ENCODE measurements at regions of chr3 and their contacts with region 1.

Region 1: GRCh38 chr3:47791193-47791855 is 9.6 kb upstream of the SMARCC1 start:
- DNase-seq: no peak
- ATAC-seq: no peak
- H3K4me3 ChIP-seq: no peak overlapping the region
- H3K4me3 Mint-ChIP-seq: no peak overlapping the region
- H3K27ac ChIP-seq: no peak overlapping the region
- H3K27ac Mint-ChIP-seq: peak overlapping the region in 1 of 9 donors; percentile 14
- H3K4me1 ChIP-seq: no peaks in the 10 kb centered on the region
- H3K4me1 Mint-ChIP-seq: peaks cover 0 to 5% (median 3%) of the 10 kb centered on the region in 7 donors
- H3K27me3 ChIP-seq: no peaks in the 10 kb centered on the region
- H3K27me3 Mint-ChIP-seq: no peaks in the 10 kb centered on the region

Region 2: DNA sequence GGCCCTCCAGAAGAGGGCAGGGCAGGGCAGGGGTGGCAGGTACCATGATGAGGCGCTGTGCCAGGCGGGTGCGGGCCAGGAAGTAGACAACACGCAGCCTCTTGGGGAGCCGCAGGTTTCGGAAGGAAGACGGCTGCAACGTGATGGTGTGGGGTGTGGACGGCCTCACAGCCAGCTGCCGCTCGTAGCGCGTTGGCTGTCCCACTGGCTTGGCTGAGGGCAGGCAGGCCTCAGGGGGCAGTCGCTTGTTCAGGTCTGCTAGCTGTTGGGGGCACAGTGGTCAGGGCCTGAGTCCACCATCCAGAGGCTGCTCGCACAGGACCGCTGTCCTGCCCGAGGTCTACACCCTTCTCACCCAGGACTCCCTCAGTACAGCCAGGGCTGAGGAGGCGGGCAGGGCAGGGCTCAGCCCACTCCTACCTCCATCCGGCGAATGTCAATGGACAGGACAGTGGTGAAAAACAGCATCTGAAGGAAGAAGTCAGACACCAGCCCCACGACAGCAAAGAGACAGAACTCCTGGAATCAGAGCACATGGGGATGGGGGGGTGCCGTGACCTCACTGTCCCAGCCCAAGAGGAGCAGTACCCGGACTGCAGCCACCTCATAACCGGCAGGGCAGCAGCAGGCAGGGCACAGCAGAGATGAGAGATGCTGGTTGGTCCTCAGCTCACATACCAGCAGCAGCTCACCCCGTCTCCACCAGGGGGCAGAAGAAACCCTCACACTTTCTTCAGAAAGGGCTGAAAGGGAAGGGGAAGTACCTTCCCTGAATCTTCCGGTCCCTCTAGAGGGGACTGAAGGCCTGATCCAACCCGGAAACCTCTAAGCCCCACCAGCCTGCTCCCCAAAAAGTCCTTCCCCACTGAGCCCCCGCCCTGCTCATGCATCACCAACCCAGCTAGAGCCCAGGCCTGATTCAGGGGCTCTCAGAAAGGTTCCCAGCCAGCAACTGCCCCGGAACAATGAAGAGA is 370.5 kb before region 1 on chr3:
- CTCF ChIA-PET with region 1: interaction called, 3 read pairs
- POLR2A ChIA-PET with region 1: no interaction called
- intact Hi-C with region 1: loop called in 1 of 2 experiments (anchors 1 kb)
- DNase-seq: peak; percentile 66 to 90 (median 88)
- ATAC-seq: peak; percentile 98
- H3K4me3 ChIP-seq: peak overlapping the region; percentile 29
- H3K4me3 Mint-ChIP-seq: peak overlapping the region; percentile 56 to 86 (median 78)
- H3K27ac ChIP-seq: peak overlapping the region; percentile 79
- H3K27ac Mint-ChIP-seq: peak overlapping the region; percentile 90 to 100 (median 99)
- H3K4me1 ChIP-seq: peaks cover 8 to 15% of the 10 kb centered on the region in 2 donors
- H3K4me1 Mint-ChIP-seq: peaks cover 0 to 22% (median 10%) of the 10 kb centered on the region in 7 donors
- H3K27me3 ChIP-seq: no peaks in the 10 kb centered on the region
- H3K27me3 Mint-ChIP-seq: no peaks in the 10 kb centered on the region

Region 3: GRCh38 chr3:47522082-47522987 is 269.0 kb before region 1 on chr3:
- CTCF ChIA-PET with region 1: interaction called, 36 read pairs
- POLR2A ChIA-PET with region 1: interaction called, 5 read pairs
- intact Hi-C with region 1: loop called (anchors 1 kb)
- DNase-seq: peak; percentile 36 to 75 (median 60)
- ATAC-seq: peak; percentile 97
- H3K4me3 ChIP-seq: no peak overlapping the region
- H3K4me3 Mint-ChIP-seq: no peak overlapping the region
- H3K27ac ChIP-seq: no peak overlapping the region
- H3K27ac Mint-ChIP-seq: peak overlapping the region in 2 of 9 donors; percentile 15 to 67
- H3K4me1 ChIP-seq: no peaks in the 10 kb centered on the region
- H3K4me1 Mint-ChIP-seq: peaks cover 0 to 11% (median 0%) of the 10 kb centered on the region in 7 donors
- H3K27me3 ChIP-seq: no peaks in the 10 kb centered on the region
- H3K27me3 Mint-ChIP-seq: peaks cover 0 to 8% (median 0%) of the 10 kb centered on the region in 5 donors

Region 4: DNA sequence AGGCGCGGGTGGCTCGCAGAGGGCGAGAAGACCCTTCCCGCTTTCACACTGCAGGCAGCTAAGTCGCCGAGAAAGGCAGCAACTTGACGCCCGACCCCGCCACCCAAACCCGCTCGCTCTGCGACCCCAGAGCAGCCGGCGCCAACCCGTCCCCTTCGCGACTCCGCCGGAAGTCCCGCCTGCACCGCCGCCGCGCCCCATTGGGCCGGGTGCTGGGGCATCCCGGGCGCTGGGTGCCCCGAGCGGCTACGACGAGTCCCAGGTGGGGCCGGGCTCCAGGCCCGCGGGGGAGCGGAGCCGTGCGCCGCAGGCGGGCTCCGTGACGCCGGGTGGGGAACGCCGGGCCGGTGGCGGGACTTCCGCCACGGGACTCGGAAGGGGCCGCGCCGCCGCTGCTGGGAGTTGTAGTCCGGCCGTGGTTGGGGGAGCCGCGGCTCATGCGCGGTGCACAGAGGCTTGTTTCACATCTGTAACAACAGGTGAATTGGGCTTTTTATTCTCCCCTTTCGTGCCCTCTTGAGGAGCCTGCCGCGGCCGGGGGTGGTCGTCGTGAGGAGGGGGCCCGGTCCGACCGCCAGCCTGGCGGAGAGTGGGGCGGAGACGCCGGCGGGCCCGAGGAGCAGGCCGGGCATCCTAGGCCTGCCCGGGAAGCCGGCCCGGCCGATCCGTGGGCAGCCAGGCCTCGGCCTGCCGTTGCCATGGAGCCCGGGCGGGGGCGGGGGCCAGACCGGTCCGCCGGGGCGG is 11.6 kb after region 1 on chr3 and contains the start of gene DHX30:
- CTCF ChIA-PET with region 1: interaction called, 3 read pairs
- POLR2A ChIA-PET with region 1: interaction called, 3 read pairs
- intact Hi-C with region 1: loop called (anchors 1 kb)
- DNase-seq: peak; percentile 77 to 90 (median 82)
- ATAC-seq: peak; percentile 95
- H3K4me3 ChIP-seq: peak within 1 kb of the TSS; percentile 65
- H3K4me3 Mint-ChIP-seq: peak within 1 kb of the TSS; percentile 89 to 98 (median 95)
- H3K27ac ChIP-seq: peak within 1 kb of the TSS; percentile 92
- H3K27ac Mint-ChIP-seq: peak within 1 kb of the TSS; percentile 92 to 98 (median 95)
- H3K4me1 ChIP-seq: peaks cover 11 to 12% of the 10 kb centered on the region in 2 donors
- H3K4me1 Mint-ChIP-seq: peaks cover 6 to 25% (median 20%) of the 10 kb centered on the region in 7 donors
- H3K27me3 ChIP-seq: no peaks in the 10 kb centered on the region
- H3K27me3 Mint-ChIP-seq: no peaks in the 10 kb centered on the region
- total RNA-seq, gene DHX30: 64.1 to 103 (median 92.0) TPM

Region 5: DNA sequence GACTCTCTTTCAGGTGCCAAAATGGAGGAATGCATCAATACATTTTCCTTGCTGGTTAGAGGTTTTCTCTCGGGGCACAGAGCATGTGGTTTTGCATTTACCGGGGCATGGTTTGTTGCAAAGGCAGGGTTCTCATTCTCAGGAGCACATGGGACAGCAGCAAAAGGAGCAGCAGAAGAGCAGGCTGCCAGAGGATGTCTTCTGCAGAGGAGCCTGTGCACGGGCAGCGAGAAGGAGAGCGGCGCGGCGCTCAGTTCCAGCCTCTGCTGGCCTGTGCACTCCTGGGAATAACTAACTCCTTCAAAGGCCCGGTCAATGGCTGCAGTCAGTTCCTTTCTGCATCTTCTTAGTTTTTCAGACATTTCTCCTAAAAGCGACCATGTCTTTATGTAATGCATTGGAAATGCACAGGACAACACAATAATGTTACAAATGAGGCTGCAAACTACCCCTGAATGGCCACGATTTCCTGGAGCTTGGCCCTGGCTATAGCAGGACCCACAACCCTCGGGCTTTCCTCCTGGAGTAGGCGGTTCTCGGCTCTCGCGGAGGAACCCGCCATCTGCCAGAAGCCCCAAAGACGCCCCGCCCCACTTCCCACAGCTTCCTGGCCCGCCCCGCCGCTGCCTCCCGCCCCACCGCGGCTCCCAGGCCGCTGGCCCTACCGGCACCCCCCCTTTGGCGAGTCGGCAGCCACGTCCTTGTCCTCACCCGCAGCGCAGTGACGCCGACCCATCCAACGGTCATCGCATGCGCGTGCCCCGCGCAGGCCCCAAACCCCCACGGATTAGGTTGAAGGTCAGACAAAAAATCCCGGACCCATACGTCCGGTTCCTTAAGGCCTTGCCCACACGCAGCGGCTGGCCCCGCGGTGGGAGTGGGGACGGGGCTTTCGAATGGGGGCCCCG is 1485.4 kb after region 1 on chr3 and contains the start of gene C3orf62:
- CTCF ChIA-PET with region 1: no interaction called
- POLR2A ChIA-PET with region 1: no interaction called
- intact Hi-C with region 1: no loop called
- DNase-seq: peak; percentile 41 to 85 (median 55)
- ATAC-seq: peak; percentile 91
- H3K4me3 ChIP-seq: peak within 1 kb of the TSS; percentile 77
- H3K4me3 Mint-ChIP-seq: peak within 1 kb of the TSS; percentile 80 to 91 (median 87)
- H3K27ac ChIP-seq: peak within 1 kb of the TSS; percentile 84
- H3K27ac Mint-ChIP-seq: peak within 1 kb of the TSS; percentile 81 to 94 (median 88)
- H3K4me1 ChIP-seq: peaks cover 10% of the 10 kb centered on the region in 2 donors
- H3K4me1 Mint-ChIP-seq: peaks cover 6 to 33% (median 27%) of the 10 kb centered on the region in 7 donors
- H3K27me3 ChIP-seq: no peaks in the 10 kb centered on the region
- H3K27me3 Mint-ChIP-seq: no peaks in the 10 kb centered on the region
- total RNA-seq, gene C3orf62: 8.6 to 14.5 (median 10.9) TPM

Measured in naive thymus-derived CD4-positive, alpha-beta T cell (primary cell).